Transverse colon (tissue), 4 donors: ENCODE measurements at regions of chr5 and their contacts with region 1.

Region 1: GRCh38 chr5:148708854-148709253 is 54.5 kb upstream of the HTR4 start:
- DNase-seq: no peak
- H3K4me3 ChIP-seq: no peak overlapping the region
- H3K27ac ChIP-seq: no peak overlapping the region
- H3K4me1 ChIP-seq: no peaks in the 10 kb centered on the region
- H3K27me3 ChIP-seq: no peaks in the 10 kb centered on the region
- CTCF ChIP-seq: no peak
- EP300 ChIP-seq: no peak
- POLR2A ChIP-seq: no peak

Region 2: DNA sequence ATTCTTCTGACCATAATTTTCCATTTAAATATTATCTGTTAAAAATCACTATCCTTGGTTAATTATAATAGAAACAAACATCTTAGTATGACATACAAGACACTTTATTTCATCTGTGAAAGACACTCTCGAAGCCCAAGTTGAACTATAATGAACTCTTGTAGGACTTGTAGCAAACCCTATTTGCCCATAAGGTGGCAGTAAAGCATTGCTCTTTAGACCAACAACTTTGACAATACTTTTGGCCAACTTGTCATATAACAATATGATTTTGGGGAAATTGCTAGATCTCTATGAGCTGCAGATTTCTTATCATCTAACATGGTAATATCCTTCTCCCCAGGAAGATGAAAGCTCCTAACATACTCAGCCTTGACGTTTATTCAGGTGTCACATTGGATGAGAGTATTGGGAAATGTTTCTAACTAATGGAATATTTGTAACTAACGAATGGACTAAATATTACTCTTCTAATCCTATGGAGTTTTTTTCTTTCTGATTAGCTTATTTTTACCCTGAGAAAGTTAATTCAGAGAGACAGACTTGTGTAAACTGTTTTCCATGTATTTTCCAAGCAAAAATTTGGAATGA is 529.5 kb before region 1 on chr5:
- in situ Hi-C with region 1: loop called in 1 of 4 experiments (anchors 25 kb)
- intact Hi-C with region 1: no loop called
- DNase-seq: no peak
- H3K4me3 ChIP-seq: no peak overlapping the region
- H3K27ac ChIP-seq: no peak overlapping the region
- H3K4me1 ChIP-seq: no peaks in the 10 kb centered on the region
- H3K27me3 ChIP-seq: no peaks in the 10 kb centered on the region
- CTCF ChIP-seq: peak; percentile 57 to 72 (median 63)
- EP300 ChIP-seq: no peak
- POLR2A ChIP-seq: no peak

Region 3: GRCh38 chr5:148641735-148642134 is 67.1 kb before region 1 on chr5:
- in situ Hi-C with region 1: no loop called
- intact Hi-C with region 1: no loop called
- DNase-seq: no peak
- H3K4me3 ChIP-seq: no peak overlapping the region
- H3K27ac ChIP-seq: no peak overlapping the region
- H3K4me1 ChIP-seq: peaks cover 0 to 13% (median 4%) of the 10 kb centered on the region in 4 donors
- H3K27me3 ChIP-seq: no peaks in the 10 kb centered on the region
- CTCF ChIP-seq: no peak
- EP300 ChIP-seq: no peak
- POLR2A ChIP-seq: no peak

Region 4: DNA sequence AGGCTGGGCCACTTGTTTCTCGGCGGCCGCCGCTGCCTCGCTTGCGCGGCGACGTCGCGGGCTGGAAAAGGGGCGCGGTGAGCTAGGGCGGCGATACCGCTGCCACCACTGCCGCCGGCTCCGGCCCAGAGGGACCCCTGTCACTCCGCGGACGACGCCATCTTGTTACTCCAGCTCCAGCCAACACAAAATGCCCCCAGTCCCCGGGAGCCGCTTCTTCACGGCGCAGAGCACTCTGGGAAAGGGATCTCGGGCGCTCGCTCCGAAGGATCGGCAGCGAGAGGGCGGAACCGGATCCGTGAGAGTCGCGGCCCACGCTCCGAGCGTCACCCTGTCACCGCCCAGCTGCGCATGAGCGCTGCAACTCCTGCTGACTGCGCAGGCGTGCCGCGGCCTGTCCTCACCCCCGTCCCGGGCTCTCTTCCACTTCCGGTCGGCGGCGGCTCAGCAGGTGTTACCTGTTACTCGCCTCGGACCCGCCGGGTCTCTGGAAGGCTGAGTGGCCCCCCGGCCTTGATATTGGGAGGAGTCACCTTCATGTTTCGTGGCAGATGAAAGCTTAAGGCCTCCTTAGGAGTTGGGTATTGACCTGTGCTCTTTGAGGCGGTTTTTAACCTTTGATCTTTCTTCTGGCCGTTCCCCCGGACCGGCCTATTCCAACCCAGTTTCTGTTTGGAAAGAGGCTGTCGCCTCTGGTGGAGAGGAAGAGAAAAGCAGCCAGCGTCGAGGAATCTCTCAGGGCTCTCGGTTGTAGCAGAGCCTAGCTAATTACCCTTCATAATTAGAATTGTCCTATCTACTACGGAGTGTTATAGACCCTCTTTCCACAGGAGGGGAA is 842.6 kb after region 1 on chr5 and contains the start of gene CSNK1A1:
- in situ Hi-C with region 1: no loop called
- intact Hi-C with region 1: no loop called
- DNase-seq: peak; percentile 99
- H3K4me3 ChIP-seq: peak within 1 kb of the TSS; percentile 75 to 84 (median 80)
- H3K27ac ChIP-seq: peak within 1 kb of the TSS; percentile 98 to 99 (median 98)
- H3K4me1 ChIP-seq: peaks cover 24 to 39% (median 29%) of the 10 kb centered on the region in 4 donors
- H3K27me3 ChIP-seq: no peaks in the 10 kb centered on the region
- CTCF ChIP-seq: peak; percentile 77 to 98 (median 85)
- EP300 ChIP-seq: no peak
- POLR2A ChIP-seq: peak; percentile 97
- total RNA-seq, gene CSNK1A1: 159 to 260 (median 184) TPM